ENCODE measurements at regions of chr11 and their contacts with region 1.

Region 1: GRCh38 chr11:69832561-69833413 is 13.6 kb upstream of the FGF3 start:
- DNase-seq: no peak
- H3K4me3 ChIP-seq: no peak overlapping the region
- H3K27ac ChIP-seq: no peak overlapping the region
- H3K4me1 ChIP-seq: peaks cover 0 to 13% (median 8%) of the 10 kb centered on the region in 4 donors
- H3K27me3 ChIP-seq: peaks cover 41% of the 10 kb centered on the region
- CTCF ChIP-seq: no peak
- EP300 ChIP-seq: no peak
- POLR2A ChIP-seq: no peak

Region 2: DNA sequence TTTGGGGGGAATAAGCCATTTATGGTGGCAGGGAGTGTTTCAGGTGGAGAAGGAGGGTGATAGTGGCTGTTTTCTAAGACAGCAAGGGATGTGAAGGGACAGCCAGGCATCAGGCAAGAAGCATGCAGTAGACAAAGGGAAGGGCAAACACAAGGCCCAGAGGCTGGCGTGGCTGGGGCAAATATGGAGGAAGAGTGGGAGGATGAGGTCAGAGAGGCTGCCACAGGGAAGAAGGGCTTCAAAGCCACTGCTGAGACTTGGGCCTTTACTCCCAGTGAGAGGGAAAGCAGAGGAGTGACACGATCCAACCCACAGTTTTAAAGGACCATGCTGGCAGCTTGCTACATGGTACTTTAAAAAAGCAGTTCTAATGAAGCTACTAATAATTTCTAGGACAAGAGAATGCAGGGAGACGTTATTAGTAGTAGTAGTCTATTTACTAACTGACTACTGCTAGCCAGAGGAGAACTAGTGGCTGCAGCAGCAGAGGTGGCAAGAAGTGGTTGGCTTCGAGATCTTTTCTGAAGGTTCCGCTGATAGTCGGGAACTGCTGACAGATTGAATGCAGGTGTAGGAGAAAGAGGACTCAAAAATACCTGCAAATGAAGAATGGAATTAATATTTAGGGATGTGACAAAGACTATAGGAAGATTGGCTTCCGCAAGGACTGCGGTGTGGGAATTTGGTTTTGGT is 1633.3 kb before region 1 on chr11:
- in situ Hi-C with region 1: no loop called
- intact Hi-C with region 1: loop called (anchors 5 kb)
- DNase-seq: no peak
- H3K4me3 ChIP-seq: no peak overlapping the region
- H3K27ac ChIP-seq: no peak overlapping the region
- H3K4me1 ChIP-seq: peaks cover 8 to 68% (median 17%) of the 10 kb centered on the region in 4 donors
- H3K27me3 ChIP-seq: no peaks in the 10 kb centered on the region
- CTCF ChIP-seq: no peak
- EP300 ChIP-seq: no peak
- POLR2A ChIP-seq: no peak

Region 3: DNA sequence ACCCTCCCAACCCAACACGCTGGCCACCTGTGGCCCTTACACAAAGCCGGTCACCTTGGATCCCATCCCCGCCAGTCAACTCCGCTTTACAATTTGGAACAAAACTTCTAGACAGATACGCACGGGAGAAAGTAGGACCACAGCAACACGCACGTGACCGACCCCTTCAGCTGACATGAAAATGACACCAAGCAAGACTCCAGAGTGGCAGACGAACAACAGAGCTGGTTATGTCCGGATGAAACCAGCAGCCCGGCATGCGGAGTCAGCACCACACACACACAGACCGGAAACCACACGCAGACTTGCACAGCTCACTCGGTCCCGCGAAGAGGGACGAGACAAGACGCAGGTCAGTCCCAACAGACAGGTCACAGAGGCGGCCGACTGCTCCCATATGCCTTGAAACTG is 1053.0 kb after region 1 on chr11:
- in situ Hi-C with region 1: no loop called
- intact Hi-C with region 1: no loop called
- DNase-seq: no peak
- H3K4me3 ChIP-seq: no peak overlapping the region
- H3K27ac ChIP-seq: no peak overlapping the region
- H3K4me1 ChIP-seq: no peaks in the 10 kb centered on the region
- H3K27me3 ChIP-seq: no peaks in the 10 kb centered on the region
- CTCF ChIP-seq: no peak
- EP300 ChIP-seq: no peak
- POLR2A ChIP-seq: no peak